ENCODE measurements at regions of chr1 and their contacts with region 1.

Region 1: DNA sequence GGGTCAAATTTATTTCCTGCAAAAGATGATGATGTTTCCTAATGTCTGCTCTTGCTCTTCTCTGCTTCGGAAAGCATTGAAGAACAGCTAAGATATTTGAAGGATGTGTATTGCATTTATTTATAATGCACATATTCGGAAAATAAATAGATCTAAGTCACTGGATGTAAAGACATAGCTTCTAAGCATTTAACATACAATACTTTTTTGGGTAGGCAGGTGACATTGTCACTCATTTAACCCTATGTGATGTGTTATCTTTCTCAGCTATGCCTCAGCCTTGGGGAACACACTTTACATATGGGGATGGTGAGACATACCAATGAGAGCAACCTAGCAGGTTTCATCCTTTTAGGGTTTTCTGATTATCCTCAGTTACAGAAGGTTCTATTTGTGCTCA is at the start of gene OR2G2:
- DNase-seq: no peak
- H3K27ac ChIP-seq: no peak within 1 kb of the TSS
- CTCF ChIP-seq: no peak

Region 2: DNA sequence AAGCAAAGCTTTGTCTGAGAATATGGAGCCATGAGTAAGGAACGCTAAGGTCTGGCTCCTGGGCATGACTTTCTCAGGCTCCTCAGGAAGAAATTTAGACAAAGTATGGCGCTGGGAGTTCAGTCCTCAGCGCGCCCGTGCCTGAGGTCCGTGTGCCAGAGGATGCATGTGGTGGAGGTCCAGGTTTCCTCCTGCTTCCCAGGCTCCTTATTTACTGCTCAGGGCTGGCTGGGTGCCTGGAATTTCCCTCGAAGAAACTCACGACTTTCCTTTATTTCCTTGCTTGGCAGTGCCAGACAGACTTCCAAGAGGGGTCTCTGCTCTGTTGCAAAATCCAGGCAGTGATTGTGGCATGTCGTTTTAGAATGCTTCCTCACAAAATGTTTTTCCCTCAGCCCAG is 25.9 kb before region 1 on chr1:
- CTCF ChIA-PET with region 1: no interaction called
- POLR2A ChIA-PET with region 1: no interaction called
- DNase-seq: no peak
- H3K27ac ChIP-seq: no peak overlapping the region
- CTCF ChIP-seq: no peak

Region 3: GRCh38 chr1:247605286-247605685 is 17.2 kb after region 1 on chr1 and contains the start of gene OR2G3:
- CTCF ChIA-PET with region 1: no interaction called
- POLR2A ChIA-PET with region 1: interaction called, 13 read pairs
- DNase-seq: no peak
- H3K27ac ChIP-seq: no peak within 1 kb of the TSS
- CTCF ChIP-seq: no peak

Region 4: DNA sequence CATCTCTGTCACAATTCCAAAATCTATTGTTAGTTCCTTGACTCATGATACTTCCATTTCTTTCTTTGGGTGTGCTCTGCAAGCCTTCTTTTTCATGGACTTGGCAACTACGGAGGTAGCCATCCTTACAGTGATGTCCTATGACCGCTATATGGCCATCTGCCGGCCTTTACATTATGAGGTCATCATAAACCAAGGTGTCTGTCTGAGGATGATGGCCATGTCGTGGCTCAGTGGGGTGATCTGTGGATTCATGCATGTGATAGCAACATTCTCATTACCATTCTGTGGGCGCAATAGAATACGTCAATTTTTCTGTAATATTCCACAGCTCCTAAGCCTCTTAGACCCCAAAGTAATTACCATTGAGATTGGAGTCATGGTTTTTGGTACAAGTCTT is 31.8 kb after region 1 on chr1:
- CTCF ChIA-PET with region 1: no interaction called
- POLR2A ChIA-PET with region 1: no interaction called
- DNase-seq: no peak
- H3K27ac ChIP-seq: no peak overlapping the region
- CTCF ChIP-seq: no peak

Measured in RWPE1 (cell line).